Common myeloid progenitor, CD34-positive (primary cell): ENCODE measurements at regions of chr15 and their contacts with region 1.

Region 1: GRCh38 chr15:60362321-60363086 is 35.3 kb downstream of the ANXA2 start:
- DNase-seq: peak in 2 of 3 donors; percentile 6 to 7
- H3K4me3 ChIP-seq: no peak overlapping the region
- H3K27ac ChIP-seq: no peak overlapping the region
- H3K4me1 ChIP-seq: peaks cover 0 to 2% (median 0%) of the 10 kb centered on the region in 4 experiments
- H3K27me3 ChIP-seq: no peaks in the 10 kb centered on the region

Region 2: GRCh38 chr15:59966262-59966661 is 396.2 kb before region 1 on chr15:
- CTCF ChIA-PET with region 1: no interaction called
- POLR2A ChIA-PET with region 1: no interaction called
- DNase-seq: no peak
- H3K4me3 ChIP-seq: no peak overlapping the region
- H3K27ac ChIP-seq: no peak overlapping the region
- H3K4me1 ChIP-seq: no peaks in the 10 kb centered on the region
- H3K27me3 ChIP-seq: no peaks in the 10 kb centered on the region

Region 3: GRCh38 chr15:60444289-60444912 is 81.9 kb after region 1 on chr15:
- CTCF ChIA-PET with region 1: interaction called, 21 read pairs
- POLR2A ChIA-PET with region 1: no interaction called
- DNase-seq: peak in 1 of 3 donors; percentile 3
- H3K4me3 ChIP-seq: no peak overlapping the region
- H3K27ac ChIP-seq: no peak overlapping the region
- H3K4me1 ChIP-seq: no peaks in the 10 kb centered on the region
- H3K27me3 ChIP-seq: no peaks in the 10 kb centered on the region

Region 4: GRCh38 chr15:60520825-60521368 is 158.4 kb after region 1 on chr15:
- CTCF ChIA-PET with region 1: interaction called, 95 read pairs
- POLR2A ChIA-PET with region 1: no interaction called
- DNase-seq: peak; percentile 67 to 87 (median 81)
- H3K4me3 ChIP-seq: no peak overlapping the region
- H3K27ac ChIP-seq: no peak overlapping the region
- H3K4me1 ChIP-seq: peaks cover 0 to 2% (median 2%) of the 10 kb centered on the region in 4 experiments
- H3K27me3 ChIP-seq: no peaks in the 10 kb centered on the region

Region 5: GRCh38 chr15:60526127-60526625 is 163.7 kb after region 1 on chr15:
- CTCF ChIA-PET with region 1: interaction called, 95 read pairs
- POLR2A ChIA-PET with region 1: no interaction called
- DNase-seq: no peak
- H3K4me3 ChIP-seq: no peak overlapping the region
- H3K27ac ChIP-seq: no peak overlapping the region
- H3K4me1 ChIP-seq: no peaks in the 10 kb centered on the region
- H3K27me3 ChIP-seq: no peaks in the 10 kb centered on the region